ENCODE measurements at regions of chr9 and their contacts with region 1.

Region 1: GRCh38 chr9:12702160-12702758 is 9.1 kb downstream of the TYRP1 start:
- DNase-seq: peak; percentile 8 to 72
- ATAC-seq: peak; percentile 91 to 95
- H3K4me3 ChIP-seq: no peak overlapping the region
- H3K27ac ChIP-seq: no peak overlapping the region
- H3K4me1 ChIP-seq: peaks cover 8% of the 10 kb centered on the region; the same call in 1 of the 3 replicates
- CTCF ChIP-seq: peak; percentile 84
- EP300 ChIP-seq: no peak
- POLR2A ChIP-seq: no peak
- RAD21 ChIP-seq: peak; percentile 81 to 86

Region 2: GRCh38 chr9:12712532-12712931 is 10.3 kb after region 1 on chr9:
- CTCF ChIA-PET with region 1: interaction called, 11 read pairs
- POLR2A ChIA-PET with region 1: no interaction called
- DNase-seq: no peak
- ATAC-seq: no peak
- H3K4me3 ChIP-seq: no peak overlapping the region
- H3K27ac ChIP-seq: no peak overlapping the region
- H3K4me1 ChIP-seq: peaks cover 10% of the 10 kb centered on the region; the same call in 1 of the 3 replicates
- CTCF ChIP-seq: no peak
- EP300 ChIP-seq: no peak
- POLR2A ChIP-seq: no peak
- RAD21 ChIP-seq: no peak

Region 3: GRCh38 chr9:13088720-13089427 is 386.6 kb after region 1 on chr9:
- CTCF ChIA-PET with region 1: interaction called, 18 read pairs
- POLR2A ChIA-PET with region 1: no interaction called
- DNase-seq: peak; percentile 57 to 70
- ATAC-seq: peak; percentile 86 to 91
- H3K4me3 ChIP-seq: 0 out of 3 replicates have a peak overlapping the region, but pooled peaks have one; percentile 11
- H3K27ac ChIP-seq: no peak overlapping the region
- H3K4me1 ChIP-seq: no peaks in the 10 kb centered on the region
- CTCF ChIP-seq: peak; percentile 89
- EP300 ChIP-seq: no peak
- POLR2A ChIP-seq: no peak
- RAD21 ChIP-seq: peak; percentile 78 to 84